Heart right ventricle (tissue), 16 donors: ENCODE measurements at regions of chr10 and their contacts with region 1.

Region 1: GRCh38 chr10:51092402-51092801 is 18.1 kb downstream of the PRKG1 start:
- DNase-seq: peak; percentile 61 to 88
- ATAC-seq: peak; percentile 79 to 92 (median 86)
- H3K4me3 ChIP-seq: no peak overlapping the region
- H3K27ac ChIP-seq: peak overlapping the region in 7 of 10 donors; percentile 10 to 60 (median 48)
- H3K4me1 ChIP-seq: peaks cover 0 to 62% (median 23%) of the 10 kb centered on the region in 9 donors
- H3K27me3 ChIP-seq: no peaks in the 10 kb centered on the region
- CTCF ChIP-seq: no peak

Region 2: DNA sequence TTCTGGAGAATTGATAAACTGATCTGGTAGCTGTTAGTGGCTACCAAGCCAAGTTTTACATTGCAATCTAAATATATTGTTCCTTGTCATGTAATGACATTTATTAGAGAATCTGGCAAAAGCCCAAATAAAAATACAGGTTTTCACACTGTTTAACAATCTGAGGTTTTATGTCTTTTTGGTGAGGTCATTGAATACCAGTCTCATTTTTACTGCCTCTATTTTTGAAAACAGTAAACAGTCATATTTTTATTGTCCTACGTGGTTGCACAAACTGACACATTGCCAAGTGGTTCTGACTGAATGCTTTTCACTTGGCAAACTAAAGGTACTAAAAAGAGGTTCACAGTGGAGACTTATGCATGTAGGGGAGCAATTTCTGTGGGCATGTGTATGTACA is 139.4 kb after region 1 on chr10:
- intact Hi-C with region 1: loop called in 1 of 10 experiments (anchors 5 kb)
- DNase-seq: no peak
- ATAC-seq: peak in 1 of 8 donors; percentile 35
- H3K4me3 ChIP-seq: no peak overlapping the region
- H3K27ac ChIP-seq: peak overlapping the region in 8 of 10 donors; percentile 2 to 68 (median 42)
- H3K4me1 ChIP-seq: peaks cover 0 to 64% (median 21%) of the 10 kb centered on the region in 9 donors
- H3K27me3 ChIP-seq: no peaks in the 10 kb centered on the region
- CTCF ChIP-seq: no peak